Activated B cell treated with CpG ODN at 0.5 μM for 24 hours (primary cell): ENCODE measurements at regions of chr17 and their contacts with region 1.

Region 1: DNA sequence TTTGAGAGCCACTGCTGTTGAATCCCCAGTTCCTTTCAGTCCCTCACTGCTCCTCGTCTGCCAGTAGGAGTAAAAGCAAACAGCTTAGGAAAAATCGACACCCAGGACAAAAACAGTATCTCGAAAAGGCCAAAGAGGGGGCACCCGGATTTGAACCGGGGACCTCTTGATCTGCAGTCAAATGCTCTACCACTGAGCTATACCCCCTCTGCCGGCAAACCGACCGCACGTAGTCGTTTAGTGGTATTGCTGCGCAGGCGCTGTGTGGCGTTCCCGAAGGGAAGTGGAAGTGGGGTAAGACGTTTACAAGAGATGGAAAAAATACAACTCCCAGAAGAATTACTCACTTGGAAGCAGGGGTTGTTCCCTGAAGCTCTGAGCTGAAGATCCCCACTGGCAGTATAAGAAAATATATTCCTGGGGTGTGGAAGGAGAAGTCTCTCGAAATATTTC is 2.2 kb upstream of the PLXDC1 start:
- DNase-seq: peak; percentile 92
- ATAC-seq: peak; percentile 54
- H3K4me3 Mint-ChIP-seq: peak overlapping the region; percentile 97
- H3K27ac Mint-ChIP-seq: peak overlapping the region; percentile 99
- H3K4me1 Mint-ChIP-seq: peaks cover 36% of the 10 kb centered on the region
- H3K27me3 Mint-ChIP-seq: peaks cover 38% of the 10 kb centered on the region
- CTCF ChIP-seq: no peak

Region 2: GRCh38 chr17:38702166-38702899 is 451.3 kb before region 1 on chr17:
- CTCF ChIA-PET with region 1: no interaction called
- POLR2A ChIA-PET with region 1: interaction called, 3 read pairs
- intact Hi-C with region 1: loop called (anchors 1 kb)
- DNase-seq: peak; percentile 77
- ATAC-seq: peak; percentile 28
- H3K4me3 Mint-ChIP-seq: peak overlapping the region; percentile 96
- H3K27ac Mint-ChIP-seq: peak overlapping the region; percentile 99
- H3K4me1 Mint-ChIP-seq: peaks cover 48% of the 10 kb centered on the region
- H3K27me3 Mint-ChIP-seq: no peaks in the 10 kb centered on the region
- CTCF ChIP-seq: no peak

Region 3: DNA sequence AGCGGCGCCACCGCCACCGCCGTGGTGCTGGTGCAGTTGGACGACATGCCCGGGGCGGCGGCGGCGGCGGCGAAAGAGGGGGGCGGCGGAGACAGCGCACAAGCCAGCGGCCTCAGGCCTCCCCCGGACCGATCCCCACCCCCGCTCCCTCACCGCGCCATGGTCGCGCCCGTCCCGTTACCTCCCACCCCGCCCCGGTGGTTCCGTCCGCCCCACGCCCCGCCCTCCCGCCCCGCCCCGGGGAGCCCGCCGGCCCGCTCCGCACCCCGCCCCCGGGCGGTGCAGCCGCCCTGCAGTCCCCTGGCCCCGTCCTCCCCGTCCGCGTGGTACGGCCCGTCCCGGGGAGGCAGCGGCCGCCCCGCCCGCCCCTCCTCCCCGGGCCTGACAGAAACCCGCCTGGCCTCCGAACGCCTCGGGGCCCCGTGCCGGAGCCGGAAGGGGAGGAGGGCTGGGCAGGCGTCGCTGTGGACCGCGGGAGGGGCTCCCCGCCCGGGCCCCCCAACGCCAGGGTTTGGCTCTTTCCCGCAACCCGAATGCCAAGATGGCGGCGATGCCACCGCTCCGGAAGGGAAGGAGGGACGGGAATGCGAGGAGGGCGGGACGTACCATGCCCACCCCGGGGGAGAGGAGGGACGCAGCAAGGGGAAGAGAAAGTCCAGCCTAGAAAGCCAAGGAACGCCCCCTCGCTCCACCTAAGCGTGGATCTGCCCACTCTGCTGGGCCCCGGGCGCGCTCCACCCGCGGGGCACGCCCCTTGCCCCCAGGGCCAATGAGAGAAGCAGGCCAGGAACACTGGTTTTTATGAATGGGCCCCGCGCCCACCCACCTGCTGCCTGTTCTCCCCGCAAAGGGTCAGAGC is 354.0 kb before region 1 on chr17 and contains the start of gene PIP4K2B:
- CTCF ChIA-PET with region 1: interaction called, 4 read pairs
- POLR2A ChIA-PET with region 1: no interaction called
- intact Hi-C with region 1: loop called (anchors 2 kb)
- DNase-seq: peak; percentile 86
- ATAC-seq: peak; percentile 85
- H3K4me3 Mint-ChIP-seq: peak within 1 kb of the TSS; percentile 88
- H3K27ac Mint-ChIP-seq: peak within 1 kb of the TSS; percentile 87
- H3K4me1 Mint-ChIP-seq: peaks cover 32% of the 10 kb centered on the region
- H3K27me3 Mint-ChIP-seq: no peaks in the 10 kb centered on the region
- CTCF ChIP-seq: no peak
- total RNA-seq, gene PIP4K2B: 32.1 and 33.0 TPM in 2 replicates

Region 4: DNA sequence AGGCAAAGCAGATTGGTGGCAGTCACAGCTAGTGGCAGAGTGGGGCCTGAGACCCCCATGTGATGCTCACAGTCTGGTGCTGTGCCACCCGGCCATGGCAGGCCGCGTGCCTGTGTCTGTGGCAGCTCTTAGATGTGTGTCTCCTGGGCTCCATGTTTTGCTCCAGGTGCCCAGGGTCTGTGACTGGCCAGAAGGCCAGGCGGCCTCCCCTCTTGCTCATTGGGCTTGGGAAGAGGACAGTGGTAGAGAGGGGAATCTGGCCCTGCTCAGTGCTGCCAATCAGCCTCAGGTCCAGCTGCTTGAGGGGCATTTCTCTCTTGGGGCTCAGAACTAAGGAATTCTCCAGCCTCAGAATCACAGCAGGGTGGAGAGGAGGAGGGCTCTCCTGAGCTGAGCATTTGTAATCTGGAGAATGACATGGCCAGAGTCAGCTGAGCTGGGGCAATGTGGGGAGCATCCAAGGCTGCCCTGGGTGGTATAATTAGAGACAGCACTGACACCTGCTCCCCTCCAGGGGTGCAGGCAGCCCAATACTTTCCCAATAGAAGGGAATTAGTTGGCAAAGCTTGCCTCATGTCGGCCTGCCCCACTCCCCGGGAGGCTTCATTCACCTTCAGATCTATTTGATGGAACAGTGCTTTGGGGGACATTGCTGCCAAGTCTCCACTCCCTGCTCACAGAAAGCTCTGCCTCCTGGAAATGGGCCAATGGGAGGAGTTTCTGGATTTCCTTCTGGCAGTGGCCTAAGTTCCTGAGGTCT is 230.9 kb before region 1 on chr17:
- CTCF ChIA-PET with region 1: interaction called, 11 read pairs
- POLR2A ChIA-PET with region 1: interaction called, 4 read pairs
- intact Hi-C with region 1: loop called (anchors 2 kb)
- DNase-seq: no peak
- ATAC-seq: no peak
- H3K4me3 Mint-ChIP-seq: no peak overlapping the region
- H3K27ac Mint-ChIP-seq: peak overlapping the region; percentile 55
- H3K4me1 Mint-ChIP-seq: peaks cover 21% of the 10 kb centered on the region
- H3K27me3 Mint-ChIP-seq: no peaks in the 10 kb centered on the region
- CTCF ChIP-seq: no peak

Region 5: GRCh38 chr17:39069114-39069756 is 84.4 kb before region 1 on chr17:
- CTCF ChIA-PET with region 1: interaction called, 7 read pairs
- POLR2A ChIA-PET with region 1: no interaction called
- intact Hi-C with region 1: loop called (anchors 1 kb)
- DNase-seq: no peak
- ATAC-seq: peak; percentile 85
- H3K4me3 Mint-ChIP-seq: no peak overlapping the region
- H3K27ac Mint-ChIP-seq: no peak overlapping the region
- H3K4me1 Mint-ChIP-seq: no peaks in the 10 kb centered on the region
- H3K27me3 Mint-ChIP-seq: no peaks in the 10 kb centered on the region
- CTCF ChIP-seq: no peak

Region 6: GRCh38 chr17:39134878-39135277 is 18.7 kb before region 1 on chr17:
- CTCF ChIA-PET with region 1: no interaction called
- POLR2A ChIA-PET with region 1: no interaction called
- intact Hi-C with region 1: no loop called
- DNase-seq: no peak
- ATAC-seq: no peak
- H3K4me3 Mint-ChIP-seq: no peak overlapping the region
- H3K27ac Mint-ChIP-seq: no peak overlapping the region
- H3K4me1 Mint-ChIP-seq: no peaks in the 10 kb centered on the region
- H3K27me3 Mint-ChIP-seq: peaks cover 6% of the 10 kb centered on the region
- CTCF ChIP-seq: no peak

Region 7: GRCh38 chr17:39199820-39200069 is 46.1 kb after region 1 on chr17:
- CTCF ChIA-PET with region 1: interaction called, 5 read pairs
- POLR2A ChIA-PET with region 1: interaction called, 32 read pairs
- intact Hi-C with region 1: loop called (anchors 1 kb)
- DNase-seq: peak; percentile 65
- ATAC-seq: peak; percentile 65
- H3K4me3 Mint-ChIP-seq: peak overlapping the region; percentile 99
- H3K27ac Mint-ChIP-seq: peak overlapping the region; percentile 100
- H3K4me1 Mint-ChIP-seq: peaks cover 69% of the 10 kb centered on the region
- H3K27me3 Mint-ChIP-seq: no peaks in the 10 kb centered on the region
- CTCF ChIP-seq: no peak